ENCODE measurements at regions of chr1 and their contacts with region 1.

Region 1: GRCh38 chr1:170885551-170885950 is 49.8 kb upstream of the MROH9 start:
- DNase-seq: no peak
- ATAC-seq: no peak
- H3K4me3 ChIP-seq: no peak overlapping the region
- H3K4me3 Mint-ChIP-seq: no peak overlapping the region
- H3K27ac ChIP-seq: no peak overlapping the region
- H3K27ac Mint-ChIP-seq: no peak overlapping the region
- H3K4me1 ChIP-seq: no peaks in the 10 kb centered on the region
- H3K4me1 Mint-ChIP-seq: no peaks in the 10 kb centered on the region
- H3K27me3 ChIP-seq: no peaks in the 10 kb centered on the region
- H3K27me3 Mint-ChIP-seq: peaks cover 0 to 2% of the 10 kb centered on the region in 2 donors

Region 2: DNA sequence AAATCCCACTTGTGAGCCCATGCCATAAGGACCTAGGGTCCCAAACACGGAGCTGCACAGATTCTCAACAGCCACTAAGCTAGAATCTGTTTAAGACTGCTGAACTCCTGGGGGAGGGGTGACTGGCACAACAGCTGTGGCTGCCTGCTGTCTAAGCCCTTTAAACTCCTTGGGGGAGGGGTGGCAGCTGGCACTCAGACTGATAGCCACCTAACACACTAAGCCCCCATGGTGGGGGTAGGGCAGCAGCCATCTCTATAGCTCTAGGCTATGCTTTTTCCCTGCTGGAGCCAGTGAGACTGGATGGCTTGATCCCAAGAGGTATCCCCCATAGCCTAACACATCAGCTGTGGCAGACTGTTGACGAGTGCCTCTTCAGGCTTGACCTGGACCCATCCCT is 131.9 kb after region 1 on chr1:
- CTCF ChIA-PET with region 1: interaction called in 1 of 2 experiments, 11 read pairs
- POLR2A ChIA-PET with region 1: no interaction called
- DNase-seq: no peak
- ATAC-seq: no peak
- H3K4me3 ChIP-seq: no peak overlapping the region
- H3K4me3 Mint-ChIP-seq: no peak overlapping the region
- H3K27ac ChIP-seq: no peak overlapping the region
- H3K27ac Mint-ChIP-seq: no peak overlapping the region
- H3K4me1 ChIP-seq: no peaks in the 10 kb centered on the region
- H3K4me1 Mint-ChIP-seq: no peaks in the 10 kb centered on the region
- H3K27me3 ChIP-seq: peaks cover 0 to 12% of the 10 kb centered on the region in 2 experiments
- H3K27me3 Mint-ChIP-seq: peaks cover 6 to 7% of the 10 kb centered on the region in 2 donors